ENCODE measurements at regions of chr9 and their contacts with region 1.

Region 1: DNA sequence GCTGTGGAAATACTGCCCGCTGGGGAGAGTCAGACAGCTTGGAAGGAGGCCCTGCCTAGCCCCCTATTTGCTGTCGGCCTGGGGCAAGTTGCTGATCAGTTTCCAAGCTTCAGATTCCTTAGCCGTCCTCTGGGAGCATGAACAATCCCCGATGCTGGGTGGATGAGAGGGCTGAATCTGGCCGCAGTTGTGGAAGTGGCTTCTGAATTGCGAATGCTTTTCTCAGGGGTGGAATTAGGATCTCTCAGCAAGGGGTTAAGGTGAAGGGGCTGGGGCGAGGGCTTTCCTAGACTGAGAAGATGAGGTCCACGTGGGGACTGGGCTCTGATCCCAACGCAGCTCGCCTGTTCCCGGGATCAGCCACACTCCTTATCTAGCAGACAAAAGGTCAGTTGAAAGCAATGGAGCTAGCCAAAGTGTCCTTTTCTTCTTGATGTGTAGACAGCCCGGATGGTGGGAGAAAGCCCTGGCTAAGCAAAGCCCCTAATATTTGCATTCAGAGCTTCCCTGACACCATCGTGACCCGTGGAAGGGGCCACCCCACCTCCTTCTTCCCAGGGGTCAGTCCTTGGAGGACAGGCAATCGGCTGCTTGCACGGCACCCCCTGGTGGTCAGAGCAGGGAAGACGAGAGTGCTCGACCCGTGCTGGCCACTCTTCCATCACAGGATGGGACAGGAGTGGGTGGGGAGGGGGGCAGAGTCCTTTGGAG is 54.9 kb downstream of the COL15A1 start:
- ATAC-seq: peak; percentile 61 to 93 (median 79)
- H3K4me3 ChIP-seq: no peak overlapping the region
- H3K27ac ChIP-seq: no peak overlapping the region
- H3K4me1 ChIP-seq: no peaks in the 10 kb centered on the region

Region 2: DNA sequence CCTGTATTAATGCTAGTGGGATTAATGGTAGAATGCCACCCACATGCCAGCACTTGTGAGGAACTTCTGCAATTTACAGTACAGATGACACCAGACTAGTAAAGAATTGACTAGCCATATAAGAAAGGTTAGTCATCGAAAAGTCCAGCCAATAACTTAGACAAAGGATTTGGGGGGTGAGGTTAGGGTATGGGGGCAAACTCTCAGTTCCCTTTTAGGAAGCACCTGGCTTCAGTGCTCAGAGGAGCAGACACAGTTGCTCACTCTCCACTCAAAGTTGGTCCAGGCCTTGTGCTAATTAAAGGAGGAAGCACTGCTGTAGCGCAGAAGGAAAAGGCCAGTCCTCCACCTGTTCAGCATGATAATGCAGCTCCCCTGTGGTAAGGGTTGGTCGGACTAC is 131.5 kb after region 1 on chr9:
- in situ Hi-C with region 1: loop called in 2 of 9 experiments (anchors 10 to 25 kb)
- ATAC-seq: no peak
- H3K4me3 ChIP-seq: no peak overlapping the region
- H3K27ac ChIP-seq: no peak overlapping the region
- H3K4me1 ChIP-seq: peaks cover 0 to 7% of the 10 kb centered on the region in 2 donors

Region 3: GRCh38 chr9:99803694-99804093 is 805.1 kb after region 1 on chr9:
- in situ Hi-C with region 1: no loop called
- ATAC-seq: no peak
- H3K4me3 ChIP-seq: no peak overlapping the region
- H3K27ac ChIP-seq: no peak overlapping the region
- H3K4me1 ChIP-seq: no peaks in the 10 kb centered on the region

Measured in motor neuron (in vitro differentiated cells).